Activated CD8-positive, alpha-beta T cell treated with anti-CD3 and anti-CD28 coated beads, Interleukin-2, amount 10 ng/mL, durations not matched to agents 7 days and 5 days (primary cell): ENCODE measurements at regions of chr20 and their contacts with region 1.

Region 1: GRCh38 chr20:33666293-33667244 is at the start of gene ACTL10:
- DNase-seq: peak; percentile 90
- ATAC-seq: peak; percentile 55
- H3K4me3 Mint-ChIP-seq: peak within 1 kb of the TSS; percentile 90
- H3K27ac Mint-ChIP-seq: peak within 1 kb of the TSS; percentile 95
- H3K4me1 Mint-ChIP-seq: peaks cover 47% of the 10 kb centered on the region
- H3K27me3 Mint-ChIP-seq: no peaks in the 10 kb centered on the region
- total RNA-seq, gene ACTL10: 2.9 to 3.2 TPM

Region 2: GRCh38 chr20:33450867-33451266 is 215.7 kb before region 1 on chr20:
- CTCF ChIA-PET with region 1: interaction called, 16 read pairs
- POLR2A ChIA-PET with region 1: interaction called, 3 read pairs
- DNase-seq: no peak
- ATAC-seq: no peak
- H3K4me3 Mint-ChIP-seq: no peak overlapping the region
- H3K27ac Mint-ChIP-seq: no peak overlapping the region
- H3K4me1 Mint-ChIP-seq: peaks cover 10% of the 10 kb centered on the region
- H3K27me3 Mint-ChIP-seq: no peaks in the 10 kb centered on the region

Region 3: GRCh38 chr20:33489495-33490022 is 177.0 kb before region 1 on chr20:
- CTCF ChIA-PET with region 1: interaction called, 5 read pairs
- POLR2A ChIA-PET with region 1: interaction called, 12 read pairs
- DNase-seq: peak; percentile 99
- ATAC-seq: peak; percentile 95
- H3K4me3 Mint-ChIP-seq: peak overlapping the region; percentile 84
- H3K27ac Mint-ChIP-seq: peak overlapping the region; percentile 90
- H3K4me1 Mint-ChIP-seq: peaks cover 12% of the 10 kb centered on the region
- H3K27me3 Mint-ChIP-seq: no peaks in the 10 kb centered on the region

Region 4: DNA sequence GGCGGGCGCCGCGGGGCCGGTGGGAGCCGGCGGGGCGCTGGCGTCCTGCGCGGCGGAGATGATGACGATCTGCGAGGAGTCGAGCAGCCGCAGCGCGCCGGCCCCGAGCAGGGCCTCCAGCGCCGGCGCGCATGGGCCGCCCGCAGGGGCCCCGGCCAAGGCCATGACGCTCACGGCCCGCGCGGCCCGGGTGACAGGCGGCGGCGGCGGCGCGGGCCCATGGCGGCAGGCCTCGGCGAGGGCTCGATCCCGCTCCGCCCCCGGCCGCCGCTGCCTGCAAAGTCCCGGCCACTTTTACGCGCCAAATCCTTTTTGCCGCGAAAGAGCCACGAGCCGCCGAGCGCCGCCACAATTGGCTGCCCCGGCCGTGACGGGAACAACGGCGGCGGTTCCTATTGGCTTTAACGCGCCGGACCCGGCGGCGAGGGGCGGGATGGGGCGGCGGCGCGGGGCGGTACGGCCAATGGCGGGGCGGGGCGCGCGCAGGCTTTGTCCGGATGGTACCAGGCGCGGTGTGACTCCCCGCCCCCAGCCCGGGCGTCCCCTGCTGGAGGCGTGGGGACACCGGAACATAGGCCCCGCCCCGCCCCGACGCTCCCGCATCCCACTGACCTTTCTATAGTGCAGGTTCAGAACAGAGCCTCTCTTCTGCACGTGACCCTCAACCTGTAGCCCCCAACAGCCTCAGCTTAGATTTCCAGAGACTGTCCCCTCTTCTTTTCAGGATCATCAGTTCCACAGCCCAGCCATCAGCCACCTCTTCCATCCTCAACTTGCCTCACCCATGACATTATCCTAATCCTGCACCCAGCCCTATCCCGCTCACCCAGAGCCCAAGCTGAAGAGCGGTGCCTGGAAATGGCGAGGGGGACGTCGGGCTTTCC is 19.8 kb after region 1 on chr20 and contains the start of gene E2F1:
- CTCF ChIA-PET with region 1: interaction called, 126 read pairs
- POLR2A ChIA-PET with region 1: interaction called, 148 read pairs
- DNase-seq: peak; percentile 97
- ATAC-seq: peak; percentile 91
- H3K4me3 Mint-ChIP-seq: peak within 1 kb of the TSS; percentile 94
- H3K27ac Mint-ChIP-seq: peak within 1 kb of the TSS; percentile 93
- H3K4me1 Mint-ChIP-seq: peaks cover 89% of the 10 kb centered on the region
- H3K27me3 Mint-ChIP-seq: no peaks in the 10 kb centered on the region
- total RNA-seq, gene E2F1: 74.5 to 80.8 TPM

Region 5: DNA sequence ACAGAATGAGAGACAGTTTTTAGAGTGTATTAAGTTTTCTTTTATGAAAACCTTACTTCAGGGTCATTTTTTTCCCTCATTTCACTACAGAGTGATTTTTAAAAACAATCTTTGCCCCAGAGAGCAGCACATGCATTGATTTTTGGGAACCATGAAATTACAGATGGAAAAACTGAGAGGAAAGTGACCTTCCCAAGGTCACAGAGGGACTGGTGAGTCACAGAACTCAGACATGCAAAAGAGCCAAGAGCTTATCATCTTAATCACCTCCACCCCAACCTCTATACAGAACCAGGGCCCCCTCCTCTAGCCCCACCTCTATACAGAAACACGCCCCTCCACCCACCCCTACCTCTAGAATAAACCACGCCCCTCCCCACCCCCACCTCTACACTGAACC is 42.8 kb after region 1 on chr20:
- CTCF ChIA-PET with region 1: no interaction called
- POLR2A ChIA-PET with region 1: no interaction called
- DNase-seq: no peak
- ATAC-seq: no peak
- H3K4me3 Mint-ChIP-seq: no peak overlapping the region
- H3K27ac Mint-ChIP-seq: peak overlapping the region; percentile 57
- H3K4me1 Mint-ChIP-seq: peaks cover 17% of the 10 kb centered on the region
- H3K27me3 Mint-ChIP-seq: no peaks in the 10 kb centered on the region

Region 6: GRCh38 chr20:33731693-33732165 is 65.2 kb after region 1 on chr20 and contains the start of gene ZNF341:
- CTCF ChIA-PET with region 1: interaction called, 24 read pairs
- POLR2A ChIA-PET with region 1: interaction called, 5 read pairs
- DNase-seq: peak; percentile 91
- ATAC-seq: peak; percentile 90
- H3K4me3 Mint-ChIP-seq: peak within 1 kb of the TSS; percentile 89
- H3K27ac Mint-ChIP-seq: peak within 1 kb of the TSS; percentile 94
- H3K4me1 Mint-ChIP-seq: peaks cover 28% of the 10 kb centered on the region
- H3K27me3 Mint-ChIP-seq: no peaks in the 10 kb centered on the region
- total RNA-seq, gene ZNF341: 4.7 to 5.2 TPM